Endothelial cell of umbilical vein (primary cell): ENCODE measurements at regions of chr5 and their contacts with region 1.

Region 1: GRCh38 chr5:109468737-109469420 is 59.1 kb upstream of the PJA2 start:
- DNase-seq: peak; percentile 94
- H3K4me3 ChIP-seq: no peak overlapping the region
- H3K27ac ChIP-seq: no peak overlapping the region
- H3K4me1 ChIP-seq: peaks cover 2% of the 10 kb centered on the region
- H3K27me3 ChIP-seq: no peaks in the 10 kb centered on the region
- CTCF ChIP-seq: peak; percentile 69 to 73
- POLR2A ChIP-seq: no peak

Region 2: GRCh38 chr5:108521841-108522506 is 946.9 kb before region 1 on chr5:
- CTCF ChIA-PET with region 1: no interaction called
- POLR2A ChIA-PET with region 1: no interaction called
- dilution Hi-C with region 1: no loop called
- intact Hi-C with region 1: loop called (anchors 2 kb)
- DNase-seq: peak; percentile 71
- H3K4me3 ChIP-seq: no peak overlapping the region
- H3K27ac ChIP-seq: no peak overlapping the region
- H3K4me1 ChIP-seq: no peaks in the 10 kb centered on the region
- H3K27me3 ChIP-seq: no peaks in the 10 kb centered on the region
- CTCF ChIP-seq: peak; percentile 50 to 54
- POLR2A ChIP-seq: no peak

Region 3: GRCh38 chr5:108919591-108920326 is 549.1 kb before region 1 on chr5:
- CTCF ChIA-PET with region 1: interaction called, 3 read pairs
- POLR2A ChIA-PET with region 1: no interaction called
- dilution Hi-C with region 1: no loop called
- intact Hi-C with region 1: loop called (anchors 2 kb)
- DNase-seq: peak; percentile 25
- H3K4me3 ChIP-seq: no peak overlapping the region
- H3K27ac ChIP-seq: no peak overlapping the region
- H3K4me1 ChIP-seq: no peaks in the 10 kb centered on the region
- H3K27me3 ChIP-seq: no peaks in the 10 kb centered on the region
- CTCF ChIP-seq: no peak
- POLR2A ChIP-seq: no peak

Region 4: GRCh38 chr5:109191153-109191558 is 277.7 kb before region 1 on chr5:
- CTCF ChIA-PET with region 1: no interaction called
- POLR2A ChIA-PET with region 1: no interaction called
- dilution Hi-C with region 1: no loop called
- intact Hi-C with region 1: loop called (anchors 10 kb)
- DNase-seq: peak; percentile 78
- H3K4me3 ChIP-seq: no peak overlapping the region
- H3K27ac ChIP-seq: peak overlapping the region; percentile 56
- H3K4me1 ChIP-seq: peaks cover 15% of the 10 kb centered on the region
- H3K27me3 ChIP-seq: no peaks in the 10 kb centered on the region
- CTCF ChIP-seq: no peak
- POLR2A ChIP-seq: no peak

Region 5: GRCh38 chr5:109309326-109310063 is 159.4 kb before region 1 on chr5:
- CTCF ChIA-PET with region 1: no interaction called
- POLR2A ChIA-PET with region 1: no interaction called
- dilution Hi-C with region 1: no loop called
- intact Hi-C with region 1: loop called (anchors 5 kb)
- DNase-seq: no peak
- H3K4me3 ChIP-seq: no peak overlapping the region
- H3K27ac ChIP-seq: no peak overlapping the region
- H3K4me1 ChIP-seq: no peaks in the 10 kb centered on the region
- H3K27me3 ChIP-seq: no peaks in the 10 kb centered on the region
- CTCF ChIP-seq: no peak
- POLR2A ChIP-seq: no peak